Spleen (tissue), 13 donors: ENCODE measurements at regions of chr4 and their contacts with region 1.

Region 1: GRCh38 chr4:48963042-48963679 is 22.9 kb upstream of the CWH43 start:
- DNase-seq: no peak
- H3K4me3 ChIP-seq: no peak overlapping the region
- H3K27ac ChIP-seq: no peak overlapping the region
- H3K4me1 ChIP-seq: no peaks in the 10 kb centered on the region
- H3K27me3 ChIP-seq: no peaks in the 10 kb centered on the region
- CTCF ChIP-seq: peak; percentile 64 to 94 (median 89)
- POLR2A ChIP-seq: no peak

Region 2: DNA sequence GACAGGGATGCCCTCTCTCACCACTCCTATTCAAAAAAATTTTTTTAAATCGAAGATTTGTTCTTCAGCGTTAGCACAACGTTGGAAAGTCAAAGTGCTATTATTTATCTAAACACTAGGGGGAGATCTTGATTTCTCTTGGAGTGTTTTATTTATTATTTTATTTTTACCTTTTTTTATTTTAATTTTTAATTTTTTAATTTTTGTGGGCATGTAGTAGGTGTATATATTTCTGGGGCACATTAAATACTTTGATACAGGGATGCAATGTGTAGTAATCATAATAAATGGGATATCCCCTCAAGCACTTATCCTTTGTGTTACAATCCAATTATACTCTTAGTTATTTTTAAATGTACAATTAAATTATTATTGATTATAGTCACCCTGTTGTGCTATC is 517.5 kb before region 1 on chr4:
- intact Hi-C with region 1: loop called (anchors 10 kb)
- DNase-seq: no peak
- H3K4me3 ChIP-seq: no peak overlapping the region
- H3K27ac ChIP-seq: no peak overlapping the region
- H3K4me1 ChIP-seq: no peaks in the 10 kb centered on the region
- H3K27me3 ChIP-seq: peaks cover 0 to 4% (median 0%) of the 10 kb centered on the region in 7 donors
- CTCF ChIP-seq: peak in 9 of 11 experiments; percentile 9 to 64 (median 55)
- POLR2A ChIP-seq: no peak

Region 3: GRCh38 chr4:48578132-48578968 is 384.8 kb before region 1 on chr4:
- intact Hi-C with region 1: loop called (anchors 5 kb)
- DNase-seq: no peak
- H3K4me3 ChIP-seq: no peak overlapping the region
- H3K27ac ChIP-seq: no peak overlapping the region
- H3K4me1 ChIP-seq: peaks cover 0 to 10% (median 2%) of the 10 kb centered on the region in 6 donors
- H3K27me3 ChIP-seq: no peaks in the 10 kb centered on the region
- CTCF ChIP-seq: peak; percentile 65 to 93 (median 87)
- POLR2A ChIP-seq: no peak

Region 4: GRCh38 chr4:48752726-48753125 is 210.4 kb before region 1 on chr4:
- intact Hi-C with region 1: no loop called
- DNase-seq: no peak
- H3K4me3 ChIP-seq: no peak overlapping the region
- H3K27ac ChIP-seq: peak overlapping the region in 1 of 8 donors; percentile 11
- H3K4me1 ChIP-seq: peaks cover 11 to 70% (median 25%) of the 10 kb centered on the region in 6 donors
- H3K27me3 ChIP-seq: no peaks in the 10 kb centered on the region
- CTCF ChIP-seq: no peak
- POLR2A ChIP-seq: no peak